Cardiac septum (tissue), 1 donor: ENCODE measurements at regions of chr2 and their contacts with region 1.

Region 1: DNA sequence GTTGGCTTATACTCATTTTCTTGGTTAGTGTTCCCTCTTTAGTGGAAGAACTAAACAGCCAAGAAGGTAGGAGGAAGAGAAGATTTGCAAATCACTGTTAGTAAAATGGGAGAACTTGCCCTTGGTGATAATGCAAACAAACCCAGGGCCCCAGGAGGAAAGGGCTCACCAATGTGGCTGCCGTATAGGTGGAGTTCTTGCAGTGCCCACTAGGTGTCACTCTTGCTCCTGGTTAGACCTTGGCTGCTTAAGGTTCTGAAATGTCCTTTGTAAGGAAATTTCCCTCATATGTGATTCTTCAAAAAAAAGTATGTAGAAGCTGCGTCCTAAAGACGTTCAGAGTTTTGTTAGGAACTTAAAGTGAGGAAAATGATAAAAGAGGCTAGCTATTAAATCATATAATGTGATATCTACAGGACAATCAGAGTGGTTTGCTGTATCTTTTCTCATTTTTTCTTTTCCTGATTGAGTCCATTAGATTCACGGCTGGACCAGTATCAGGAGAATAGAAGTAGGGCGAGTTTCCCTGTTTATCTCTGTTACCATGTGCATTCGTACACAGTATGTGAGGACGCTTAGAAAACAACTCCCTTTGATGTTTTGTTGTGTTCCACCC is 48.6 kb downstream of the RPIA start:
- DNase-seq: no peak

Region 2: GRCh38 chr2:88691339-88692183 is 48.5 kb before region 1 on chr2 and contains the start of gene RPIA:
- intact Hi-C with region 1: loop called (anchors 5 kb)
- DNase-seq: peak; percentile 100
- total RNA-seq, gene RPIA: 10.5 TPM

Region 3: DNA sequence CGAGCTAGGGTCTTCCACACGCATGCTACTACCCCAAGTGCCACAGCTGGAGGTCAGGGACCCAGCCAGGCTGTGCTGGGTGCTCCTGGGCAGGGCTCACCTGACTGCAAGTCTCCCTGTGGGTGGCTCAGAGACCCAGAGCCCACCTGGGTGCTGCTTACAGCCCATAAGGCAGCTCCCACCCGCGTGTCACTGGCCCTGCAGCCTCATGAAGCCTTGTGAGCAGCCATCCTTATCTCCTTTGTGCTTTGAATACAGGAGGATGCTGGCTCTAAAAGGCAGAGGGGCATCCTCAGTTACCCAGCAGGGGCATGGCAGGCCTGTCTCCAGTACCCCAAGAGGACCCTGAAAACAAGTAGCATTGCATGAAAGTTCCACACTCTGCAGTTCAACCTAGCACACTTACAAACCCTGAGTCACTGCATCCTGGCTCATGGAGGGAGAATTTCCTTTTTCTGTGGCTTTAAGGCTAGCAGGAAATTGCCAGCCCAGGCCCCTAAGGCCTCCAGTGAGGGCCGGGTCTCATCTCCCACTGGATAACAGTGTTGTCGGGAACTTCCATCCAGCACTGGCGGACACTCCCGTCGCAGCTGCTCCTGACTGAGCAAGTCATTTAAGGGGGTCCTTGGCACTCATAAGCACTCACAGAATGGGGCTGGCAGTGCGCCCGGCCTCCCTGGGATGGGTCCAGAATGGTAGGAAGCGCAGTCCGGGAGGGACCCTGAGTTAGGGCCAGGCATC is 88.5 kb after region 1 on chr2:
- intact Hi-C with region 1: loop called (anchors 5 kb)
- DNase-seq: no peak

Region 4: GRCh38 chr2:88874063-88874657 is 134.1 kb after region 1 on chr2:
- intact Hi-C with region 1: loop called (anchors 5 kb)
- DNase-seq: no peak

Region 5: DNA sequence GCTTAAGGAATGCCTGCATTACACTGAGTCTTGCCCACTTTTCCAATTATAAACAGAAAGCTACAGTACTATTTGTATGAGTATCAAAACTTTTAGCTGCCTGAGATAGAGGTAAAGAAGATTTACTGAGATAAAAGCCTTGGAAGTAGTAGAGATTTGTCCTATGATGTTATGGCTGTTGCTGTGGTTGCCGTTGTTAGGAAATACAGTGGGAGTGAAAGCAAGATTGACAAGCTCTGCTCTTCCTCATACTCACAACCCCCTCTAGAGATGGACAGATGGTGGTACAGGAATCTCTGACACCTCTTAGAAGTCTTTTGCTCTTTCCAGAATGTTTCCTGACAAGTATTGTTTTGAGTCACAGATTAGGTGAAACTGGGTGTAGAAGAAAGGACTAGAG is 193.9 kb after region 1 on chr2:
- intact Hi-C with region 1: no loop called
- DNase-seq: no peak

Region 6: DNA sequence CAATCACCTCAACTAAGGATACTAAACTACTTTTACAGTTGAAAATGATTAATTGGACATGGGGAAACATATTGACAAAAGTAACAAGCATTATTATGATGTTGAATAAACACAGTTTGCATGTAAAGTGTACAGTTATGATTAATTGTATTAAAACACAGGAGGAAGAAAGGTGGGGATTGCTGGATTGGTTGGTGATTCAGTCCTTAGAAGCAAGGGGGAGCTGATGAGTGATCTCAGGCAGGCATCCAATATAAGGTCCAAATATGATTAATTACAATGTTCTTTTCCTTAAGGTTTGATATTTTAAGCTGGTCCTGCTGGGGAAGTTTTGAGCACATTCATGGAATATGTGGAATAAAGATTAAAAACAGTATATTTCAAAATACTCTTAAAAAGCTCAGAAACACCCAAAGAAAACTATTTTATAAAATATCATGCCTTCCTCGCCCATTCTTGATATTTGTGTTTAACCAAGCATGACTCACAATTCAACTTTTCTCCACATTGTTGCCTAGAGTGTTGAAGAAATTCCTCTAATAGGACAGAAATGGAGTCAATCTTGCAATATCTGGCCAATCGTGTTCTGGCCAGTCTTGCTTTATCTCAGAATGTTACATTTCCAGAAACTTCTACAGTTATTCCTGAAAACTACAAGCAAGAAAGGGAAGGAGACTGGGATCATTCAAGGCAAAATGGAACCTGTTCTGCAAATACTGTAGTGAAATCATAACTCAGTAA is 219.6 kb after region 1 on chr2:
- intact Hi-C with region 1: no loop called
- DNase-seq: no peak